ENCODE measurements at regions of chr22 and their contacts with region 1.

Region 1: GRCh38 chr22:38705235-38706100 is at the start of gene GTPBP1:
- DNase-seq: peak; percentile 91 to 100 (median 95)
- ATAC-seq: peak; percentile 76
- H3K4me3 ChIP-seq: peak within 1 kb of the TSS; percentile 63 to 84
- H3K4me3 Mint-ChIP-seq: peak within 1 kb of the TSS; percentile 93
- H3K27ac ChIP-seq: peak within 1 kb of the TSS; percentile 69 to 77
- H3K27ac Mint-ChIP-seq: peak within 1 kb of the TSS; percentile 95
- H3K4me1 ChIP-seq: peaks cover 47% of the 10 kb centered on the region
- H3K4me1 Mint-ChIP-seq: peaks cover 64% of the 10 kb centered on the region
- H3K27me3 ChIP-seq: no peaks in the 10 kb centered on the region
- H3K27me3 Mint-ChIP-seq: no peaks in the 10 kb centered on the region
- CTCF ChIP-seq: no peak
- total RNA-seq, gene GTPBP1: 341 to 346 TPM

Region 2: GRCh38 chr22:38181453-38182247 is 523.8 kb before region 1 on chr22 and contains the start of gene PLA2G6:
- CTCF ChIA-PET with region 1: no interaction called
- POLR2A ChIA-PET with region 1: no interaction called
- intact Hi-C with region 1: loop called (anchors 5 to 10 kb)
- DNase-seq: peak; percentile 92 to 98 (median 96)
- ATAC-seq: peak; percentile 87
- H3K4me3 ChIP-seq: peak within 1 kb of the TSS; percentile 69 to 92
- H3K4me3 Mint-ChIP-seq: peak within 1 kb of the TSS; percentile 93
- H3K27ac ChIP-seq: peak within 1 kb of the TSS; percentile 18 to 90
- H3K27ac Mint-ChIP-seq: peak within 1 kb of the TSS; percentile 88
- H3K4me1 ChIP-seq: peaks cover 25% of the 10 kb centered on the region
- H3K4me1 Mint-ChIP-seq: peaks cover 49% of the 10 kb centered on the region
- H3K27me3 ChIP-seq: no peaks in the 10 kb centered on the region
- H3K27me3 Mint-ChIP-seq: no peaks in the 10 kb centered on the region
- CTCF ChIP-seq: no peak
- total RNA-seq, gene PLA2G6: 35.4 to 44.4 TPM

Region 3: DNA sequence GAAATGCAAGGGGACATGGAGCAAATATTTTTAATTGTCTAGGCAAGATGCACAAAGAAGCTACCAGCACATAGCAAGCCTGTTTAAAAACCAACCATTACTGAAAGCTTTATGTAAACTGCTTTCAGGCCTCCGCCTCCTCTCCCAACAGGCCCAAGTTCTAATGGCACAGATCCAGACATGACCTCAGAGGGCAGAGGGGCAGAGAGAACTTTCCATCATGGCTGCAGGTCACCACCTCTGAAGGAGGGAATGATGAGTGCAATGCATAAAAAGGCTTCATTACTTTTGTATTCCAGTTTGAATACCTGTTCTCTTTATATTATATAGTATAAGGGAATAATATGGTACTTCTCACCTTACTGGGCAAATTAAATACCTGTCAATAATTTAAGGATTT is 214.6 kb before region 1 on chr22:
- CTCF ChIA-PET with region 1: no interaction called
- POLR2A ChIA-PET with region 1: no interaction called
- intact Hi-C with region 1: no loop called
- DNase-seq: no peak
- ATAC-seq: no peak
- H3K4me3 ChIP-seq: no peak overlapping the region
- H3K4me3 Mint-ChIP-seq: no peak overlapping the region
- H3K27ac ChIP-seq: no peak overlapping the region
- H3K27ac Mint-ChIP-seq: peak overlapping the region; percentile 52
- H3K4me1 ChIP-seq: peaks cover 31% of the 10 kb centered on the region
- H3K4me1 Mint-ChIP-seq: peaks cover 65% of the 10 kb centered on the region
- H3K27me3 ChIP-seq: no peaks in the 10 kb centered on the region
- H3K27me3 Mint-ChIP-seq: no peaks in the 10 kb centered on the region
- CTCF ChIP-seq: no peak

Region 4: DNA sequence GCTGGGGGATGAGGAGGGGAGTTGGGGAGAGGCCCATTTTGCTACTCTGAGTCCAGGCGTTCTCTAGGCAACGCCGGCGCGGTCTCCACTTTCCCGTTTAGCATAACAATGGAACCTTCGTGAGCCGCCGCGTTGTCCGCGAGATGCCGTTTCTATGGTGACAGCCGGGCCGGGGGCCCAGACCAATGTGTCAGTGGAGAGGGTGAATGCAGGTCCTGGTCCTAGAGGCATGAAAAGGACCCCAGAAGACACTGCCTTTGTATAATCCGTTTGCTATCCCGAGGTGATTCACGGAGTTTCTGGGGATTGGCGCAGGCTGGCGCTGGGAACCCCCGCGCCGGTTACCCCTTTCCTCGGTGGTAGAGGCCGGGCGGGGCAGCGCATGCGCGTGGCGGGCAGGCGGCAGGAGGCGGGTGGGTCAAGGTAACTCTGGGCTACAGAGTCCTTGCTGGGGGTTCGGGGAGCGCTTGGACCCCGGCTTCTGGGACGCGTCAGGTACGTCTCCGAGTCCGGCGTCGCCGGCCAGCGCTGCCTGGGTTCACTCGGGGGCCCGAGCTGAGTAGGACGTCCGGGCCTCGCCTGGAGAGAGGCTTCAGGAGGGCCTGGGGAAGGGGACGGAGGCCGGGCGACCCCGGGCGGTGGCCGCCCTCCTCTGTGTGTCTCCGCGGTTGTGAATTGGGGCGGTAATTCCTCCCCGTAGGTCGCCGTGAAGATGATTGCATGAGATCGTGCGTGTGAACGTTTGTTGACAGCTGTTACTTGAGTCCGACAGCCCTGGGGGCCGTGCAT is 49.0 kb before region 1 on chr22 and contains the starts of genes CBY1 and FAM227A:
- CTCF ChIA-PET with region 1: no interaction called
- POLR2A ChIA-PET with region 1: no interaction called
- intact Hi-C with region 1: loop called (anchors 1 kb)
- DNase-seq: peak; percentile 76 to 94 (median 87)
- ATAC-seq: peak; percentile 84
- H3K4me3 ChIP-seq: peak within 1 kb of the TSS; percentile 75 to 94
- H3K4me3 Mint-ChIP-seq: peak within 1 kb of the TSS; percentile 96
- H3K27ac ChIP-seq: peak within 1 kb of the TSS; percentile 94 to 96
- H3K27ac Mint-ChIP-seq: peak within 1 kb of the TSS; percentile 99
- H3K4me1 ChIP-seq: peaks cover 11% of the 10 kb centered on the region
- H3K4me1 Mint-ChIP-seq: peaks cover 30% of the 10 kb centered on the region
- H3K27me3 ChIP-seq: no peaks in the 10 kb centered on the region
- H3K27me3 Mint-ChIP-seq: no peaks in the 10 kb centered on the region
- CTCF ChIP-seq: no peak
- total RNA-seq, gene CBY1: 7.6 to 8.9 TPM
- total RNA-seq, gene FAM227A: 0.73 TPM in 1 of 2 experiments, not detected in the other

Region 5: GRCh38 chr22:38733329-38733723 is 27.9 kb after region 1 on chr22:
- CTCF ChIA-PET with region 1: interaction called, 12 read pairs
- POLR2A ChIA-PET with region 1: interaction called, 71 read pairs
- intact Hi-C with region 1: no loop called
- DNase-seq: peak in 7 of 9 experiments; percentile 56 to 84 (median 67)
- ATAC-seq: peak; percentile 64
- H3K4me3 ChIP-seq: no peak overlapping the region
- H3K4me3 Mint-ChIP-seq: no peak overlapping the region
- H3K27ac ChIP-seq: peak overlapping the region in 1 of 2 experiments; percentile 40
- H3K27ac Mint-ChIP-seq: peak overlapping the region; percentile 75
- H3K4me1 ChIP-seq: peaks cover 49% of the 10 kb centered on the region
- H3K4me1 Mint-ChIP-seq: peaks cover 56% of the 10 kb centered on the region
- H3K27me3 ChIP-seq: no peaks in the 10 kb centered on the region
- H3K27me3 Mint-ChIP-seq: no peaks in the 10 kb centered on the region
- CTCF ChIP-seq: peak; percentile 83

Region 6: GRCh38 chr22:38793721-38794466 is 88.4 kb after region 1 on chr22 and contains the start of gene DNAL4:
- CTCF ChIA-PET with region 1: no interaction called
- POLR2A ChIA-PET with region 1: interaction called, 3 read pairs
- intact Hi-C with region 1: loop called in 1 of 2 experiments (anchors 1 kb)
- DNase-seq: peak; percentile 82 to 97 (median 92)
- ATAC-seq: peak; percentile 98
- H3K4me3 ChIP-seq: peak within 1 kb of the TSS; percentile 62 to 67
- H3K4me3 Mint-ChIP-seq: peak within 1 kb of the TSS; percentile 92
- H3K27ac ChIP-seq: peak within 1 kb of the TSS; percentile 68 to 75
- H3K27ac Mint-ChIP-seq: peak within 1 kb of the TSS; percentile 94
- H3K4me1 ChIP-seq: peaks cover 25% of the 10 kb centered on the region
- H3K4me1 Mint-ChIP-seq: peaks cover 31% of the 10 kb centered on the region
- H3K27me3 ChIP-seq: no peaks in the 10 kb centered on the region
- H3K27me3 Mint-ChIP-seq: peaks cover 10% of the 10 kb centered on the region
- CTCF ChIP-seq: no peak
- total RNA-seq, gene DNAL4: 2.5 to 3.6 TPM

Region 7: GRCh38 chr22:38927033-38927781 is 221.7 kb after region 1 on chr22:
- CTCF ChIA-PET with region 1: no interaction called
- POLR2A ChIA-PET with region 1: no interaction called
- intact Hi-C with region 1: no loop called
- DNase-seq: peak in 6 of 9 experiments; percentile 18 to 62 (median 44)
- ATAC-seq: no peak
- H3K4me3 ChIP-seq: no peak overlapping the region
- H3K4me3 Mint-ChIP-seq: peak overlapping the region; percentile 16
- H3K27ac ChIP-seq: no peak overlapping the region
- H3K27ac Mint-ChIP-seq: no peak overlapping the region
- H3K4me1 ChIP-seq: no peaks in the 10 kb centered on the region
- H3K4me1 Mint-ChIP-seq: peaks cover 4% of the 10 kb centered on the region
- H3K27me3 ChIP-seq: peaks cover 0 to 4% of the 10 kb centered on the region in 2 experiments
- H3K27me3 Mint-ChIP-seq: peaks cover 43% of the 10 kb centered on the region
- CTCF ChIP-seq: peak; percentile 22